ENCODE measurements at regions of chr1 and their contacts with region 1.

Region 1: GRCh38 chr1:218459878-218460711 is 115.0 kb downstream of the TGFB2 start:
- DNase-seq: no peak
- ATAC-seq: peak; percentile 64

Region 2: DNA sequence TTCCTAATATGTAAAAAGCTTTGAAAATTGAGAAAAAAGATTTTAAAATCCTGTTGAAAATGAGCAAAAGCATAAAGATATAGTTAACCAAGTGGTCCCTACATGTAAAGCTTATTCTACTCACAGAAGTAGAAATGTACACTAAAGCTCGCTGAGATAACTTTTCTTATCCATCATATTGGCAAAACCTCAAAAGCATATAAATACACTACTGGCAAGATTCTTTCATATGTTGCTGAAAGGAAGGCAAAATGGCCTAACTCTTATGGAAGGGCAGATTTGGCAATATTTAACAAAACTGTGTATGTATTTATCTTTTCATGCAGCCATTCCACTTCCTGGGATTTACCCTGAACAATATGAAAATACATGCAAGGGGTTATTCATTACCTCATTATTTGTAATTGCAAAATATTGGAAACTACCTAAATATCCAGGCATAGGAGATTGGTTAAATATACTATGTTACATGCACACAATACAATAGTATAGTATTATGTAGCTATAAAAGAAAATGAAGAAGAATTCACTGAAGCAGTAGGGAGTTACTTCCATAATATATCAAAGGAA is 670.4 kb after region 1 on chr1:
- intact Hi-C with region 1: no loop called
- DNase-seq: no peak
- ATAC-seq: no peak

Region 3: DNA sequence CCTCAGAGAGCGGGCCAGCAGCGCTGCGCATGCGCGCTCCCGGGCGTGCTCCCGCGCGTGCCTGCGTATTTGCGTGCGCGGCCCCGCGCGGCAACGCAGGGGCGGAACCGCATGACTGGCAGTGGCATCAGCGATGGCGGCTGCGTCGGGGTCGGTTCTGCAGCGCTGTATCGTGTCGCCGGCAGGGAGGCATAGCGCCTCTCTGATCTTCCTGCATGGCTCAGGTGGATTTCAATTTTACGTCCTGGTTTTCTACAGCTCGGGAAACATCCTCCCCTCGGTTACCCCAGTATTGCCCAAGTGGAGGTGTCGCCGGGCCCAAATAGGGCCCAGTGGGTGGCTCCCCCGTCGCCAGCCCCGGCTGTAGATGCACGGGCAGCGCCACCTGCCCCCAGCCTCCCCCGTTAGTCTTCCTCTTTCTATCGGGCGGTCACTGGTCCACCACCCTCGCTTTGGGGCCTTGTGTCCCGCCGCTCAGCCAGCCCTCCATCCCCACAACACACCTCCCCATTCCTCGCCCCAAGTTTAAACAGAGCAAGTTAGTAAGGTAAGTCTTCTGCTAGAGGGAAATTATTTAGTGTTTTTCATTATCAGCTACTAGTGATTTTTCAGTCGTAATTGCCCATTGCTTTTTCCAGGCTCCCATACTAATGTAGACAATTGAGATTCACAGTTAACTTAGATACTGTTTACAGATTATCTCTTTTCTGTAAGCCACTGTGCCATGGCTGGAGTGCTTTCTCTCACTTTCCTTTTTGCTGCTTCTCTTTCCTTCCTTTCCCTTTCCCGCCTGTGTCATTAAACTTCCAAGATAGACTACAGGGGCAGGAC is 713.9 kb after region 1 on chr1 and contains the start of gene LYPLAL1:
- intact Hi-C with region 1: loop called (anchors 10 kb)
- DNase-seq: peak; percentile 97
- ATAC-seq: peak; percentile 95
- total RNA-seq, gene LYPLAL1: 68.7 TPM